T-cell (primary cell): ENCODE measurements at regions of chr19 and their contacts with region 1.

Region 1: GRCh38 chr19:35154525-35155406 is at the start of gene FXYD5:
- DNase-seq: peak; percentile 26 to 80 (median 60)
- ATAC-seq: peak; percentile 76 to 81 (median 78)
- H3K4me3 ChIP-seq: peak within 1 kb of the TSS; percentile 94 to 99
- H3K4me3 Mint-ChIP-seq: peak within 1 kb of the TSS; percentile 99
- H3K27ac ChIP-seq: peak within 1 kb of the TSS; percentile 92
- H3K27ac Mint-ChIP-seq: peak within 1 kb of the TSS; percentile 98 to 99
- H3K4me1 ChIP-seq: peaks cover 10 to 46% of the 10 kb centered on the region in 2 experiments
- H3K4me1 Mint-ChIP-seq: peaks cover 46 to 67% (median 60%) of the 10 kb centered on the region in 3 donors
- H3K27me3 ChIP-seq: no peaks in the 10 kb centered on the region
- H3K27me3 Mint-ChIP-seq: no peaks in the 10 kb centered on the region
- total RNA-seq, gene FXYD5: 440 to 616 (median 504) TPM

Region 2: DNA sequence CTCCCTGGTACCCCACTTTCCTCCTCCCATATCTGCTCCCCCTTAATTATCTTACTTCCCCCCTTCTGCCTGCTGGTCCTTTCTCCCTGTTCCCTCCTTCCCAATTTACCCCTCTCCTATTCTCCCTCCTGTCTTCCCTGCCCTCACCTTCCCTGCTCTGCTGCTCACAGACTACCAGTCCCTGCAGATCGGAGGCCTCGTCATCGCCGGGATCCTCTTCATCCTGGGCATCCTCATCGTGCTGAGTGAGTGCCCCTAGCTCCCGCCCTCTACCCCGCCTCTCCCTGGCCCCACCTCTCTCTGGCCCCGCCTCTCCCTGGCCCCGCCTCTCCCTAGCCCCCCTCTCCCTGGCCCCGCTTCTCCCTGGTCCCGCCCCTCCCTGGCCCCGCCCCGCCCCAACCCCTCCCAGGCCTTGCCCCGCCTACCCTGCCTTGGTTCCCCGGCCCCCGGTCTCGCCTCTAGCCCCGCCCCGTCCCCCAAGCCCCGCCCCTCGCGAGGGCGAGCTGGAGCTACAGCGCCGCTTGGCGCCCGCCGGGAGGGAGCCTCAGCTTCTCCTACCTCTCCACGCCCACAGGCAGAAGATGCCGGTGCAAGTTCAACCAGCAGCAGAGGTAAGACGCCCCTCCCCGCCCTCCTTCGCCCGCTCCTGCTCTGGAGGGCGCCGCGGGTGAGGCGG is 13.7 kb before region 1 on chr19:
- CTCF ChIA-PET with region 1: interaction called, 4 to 12 read pairs
- POLR2A ChIA-PET with region 1: no interaction called
- DNase-seq: peak; percentile 89 to 97 (median 94)
- ATAC-seq: peak; percentile 82 to 89 (median 87)
- H3K4me3 ChIP-seq: peak overlapping the region; percentile 48 to 60
- H3K4me3 Mint-ChIP-seq: peak overlapping the region; percentile 81 to 85 (median 83)
- H3K27ac ChIP-seq: no peak overlapping the region
- H3K27ac Mint-ChIP-seq: peak overlapping the region; percentile 64 to 79
- H3K4me1 ChIP-seq: peaks cover 13 to 50% of the 10 kb centered on the region in 2 experiments
- H3K4me1 Mint-ChIP-seq: peaks cover 38 to 47% (median 40%) of the 10 kb centered on the region in 3 donors
- H3K27me3 ChIP-seq: peaks cover 0 to 29% of the 10 kb centered on the region in 2 experiments
- H3K27me3 Mint-ChIP-seq: peaks cover 0 to 3% of the 10 kb centered on the region in 2 donors

Region 3: DNA sequence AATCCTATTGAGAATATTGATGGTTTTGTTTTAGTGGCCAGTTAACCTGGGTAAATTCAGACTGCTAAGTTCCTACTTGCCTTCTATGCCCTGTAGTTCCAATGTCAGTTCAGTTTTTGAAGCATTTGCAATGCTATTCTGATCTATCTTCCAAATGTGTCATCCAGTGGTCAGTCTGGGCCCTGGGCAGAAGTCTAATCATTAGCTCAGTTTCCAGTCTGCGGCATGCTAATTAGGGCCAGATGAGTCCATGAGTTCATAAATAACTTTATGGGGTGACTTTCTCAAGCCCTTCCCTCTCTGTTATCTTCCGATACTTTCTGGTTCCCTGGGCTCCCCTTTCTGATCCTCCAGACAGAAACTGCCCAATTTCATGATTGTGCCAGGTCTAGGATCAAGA is 41.1 kb after region 1 on chr19:
- CTCF ChIA-PET with region 1: interaction called in 1 of 2 experiments, 10 read pairs
- POLR2A ChIA-PET with region 1: no interaction called
- DNase-seq: no peak
- ATAC-seq: no peak
- H3K4me3 ChIP-seq: no peak overlapping the region
- H3K4me3 Mint-ChIP-seq: no peak overlapping the region
- H3K27ac ChIP-seq: no peak overlapping the region
- H3K27ac Mint-ChIP-seq: no peak overlapping the region
- H3K4me1 ChIP-seq: peaks cover 0 to 17% of the 10 kb centered on the region in 2 experiments
- H3K4me1 Mint-ChIP-seq: peaks cover 22 to 37% (median 33%) of the 10 kb centered on the region in 3 donors
- H3K27me3 ChIP-seq: peaks cover 0 to 3% of the 10 kb centered on the region in 2 experiments
- H3K27me3 Mint-ChIP-seq: no peaks in the 10 kb centered on the region